Right lobe of liver (tissue), 6 donors: ENCODE measurements at regions of chr1 and their contacts with region 1.

Region 1: DNA sequence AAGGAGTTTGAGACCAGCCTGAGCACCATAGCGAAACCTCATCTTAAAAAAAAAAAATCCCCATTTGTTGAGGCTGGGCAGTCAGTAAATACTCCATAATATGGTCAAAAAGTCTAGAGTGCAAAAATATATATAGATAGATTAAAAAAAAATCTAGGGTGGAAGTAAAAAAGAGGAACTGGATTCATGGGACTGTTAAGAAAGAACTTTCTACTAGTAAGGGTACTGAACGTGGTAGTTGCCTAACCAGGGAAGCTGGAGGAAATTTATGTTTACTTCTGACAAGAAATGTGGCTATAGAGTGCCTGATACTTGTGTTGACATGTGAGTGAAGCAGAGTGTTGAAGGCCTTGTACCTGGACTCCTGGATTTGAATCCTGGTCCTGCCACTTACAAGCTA is 265.9 kb upstream of the FAM78B start:
- DNase-seq: no peak
- ATAC-seq: no peak
- H3K4me3 ChIP-seq: no peak overlapping the region
- H3K27ac ChIP-seq: no peak overlapping the region
- H3K4me1 ChIP-seq: no peaks in the 10 kb centered on the region
- H3K27me3 ChIP-seq: no peaks in the 10 kb centered on the region
- CTCF ChIP-seq: no peak
- POLR2A ChIP-seq: no peak

Region 2: GRCh38 chr1:165933446-165934178 is 499.0 kb before region 1 on chr1:
- intact Hi-C with region 1: loop called in 1 of 2 experiments (anchors 10 kb)
- DNase-seq: no peak
- ATAC-seq: no peak
- H3K4me3 ChIP-seq: no peak overlapping the region
- H3K27ac ChIP-seq: no peak overlapping the region
- H3K4me1 ChIP-seq: no peaks in the 10 kb centered on the region
- H3K27me3 ChIP-seq: no peaks in the 10 kb centered on the region
- CTCF ChIP-seq: no peak
- POLR2A ChIP-seq: no peak